ENCODE measurements at regions of chr14 and their contacts with region 1.

Region 1: GRCh38 chr14:92728759-92729370 is 19.6 kb downstream of the LGMN start:
- DNase-seq: peak; percentile 50
- CTCF ChIP-seq: no peak

Region 2: GRCh38 chr14:92717571-92718042 is 11.3 kb before region 1 on chr14:
- CTCF ChIA-PET with region 1: interaction called, 33 read pairs
- POLR2A ChIA-PET with region 1: no interaction called
- DNase-seq: no peak
- CTCF ChIP-seq: no peak

Measured in GM10248 (cell line).